Activated naive CD4-positive, alpha-beta T cell treated with anti-CD3 and anti-CD28 coated beads for 36 hours (primary cell): ENCODE measurements at regions of chr12 and their contacts with region 1.

Region 1: DNA sequence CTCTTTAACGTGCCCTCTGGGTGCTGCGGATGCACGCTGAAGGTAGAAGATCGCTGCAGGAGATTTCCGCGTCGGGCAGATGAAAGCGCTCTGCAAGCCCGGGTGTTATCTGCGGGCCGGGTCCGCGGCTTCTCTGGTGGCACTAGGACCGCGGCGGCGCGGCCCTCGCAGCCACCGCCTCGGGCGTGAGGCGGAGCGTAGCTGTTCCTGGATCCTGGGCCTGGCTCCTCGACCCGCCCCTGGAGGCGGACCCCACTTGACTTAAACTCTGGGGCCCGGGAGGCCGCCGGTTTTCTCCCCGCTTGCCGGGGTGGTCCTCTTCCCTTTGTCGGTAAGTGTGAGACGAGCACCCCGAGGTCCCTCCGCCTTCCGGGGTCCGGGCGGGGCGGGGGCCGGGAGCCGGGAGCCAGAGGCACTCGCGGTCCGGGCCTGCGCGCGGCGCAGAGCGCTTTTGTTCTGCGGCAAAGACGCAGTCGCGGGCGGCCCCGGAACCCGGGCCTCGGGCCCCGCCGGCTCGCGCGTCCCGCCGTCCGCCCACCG is at the start of gene RESF1:
- DNase-seq: peak; percentile 88
- H3K4me3 Mint-ChIP-seq: peak within 1 kb of the TSS; percentile 94
- H3K27ac Mint-ChIP-seq: peak within 1 kb of the TSS; percentile 99
- H3K4me1 Mint-ChIP-seq: peaks cover 66% of the 10 kb centered on the region
- H3K27me3 Mint-ChIP-seq: no peaks in the 10 kb centered on the region
- total RNA-seq, gene RESF1: 65.6 to 73.5 TPM

Region 2: GRCh38 chr12:31205054-31205453 is 754.2 kb before region 1 on chr12:
- CTCF ChIA-PET with region 1: no interaction called
- intact Hi-C with region 1: loop called (anchors 10 kb)
- DNase-seq: no peak
- H3K4me3 Mint-ChIP-seq: no peak overlapping the region
- H3K27ac Mint-ChIP-seq: peak overlapping the region; percentile 14
- H3K4me1 Mint-ChIP-seq: peaks cover 23% of the 10 kb centered on the region
- H3K27me3 Mint-ChIP-seq: peaks cover 15% of the 10 kb centered on the region

Region 3: GRCh38 chr12:31603546-31604009 is 355.7 kb before region 1 on chr12:
- CTCF ChIA-PET with region 1: no interaction called
- intact Hi-C with region 1: no loop called
- DNase-seq: no peak
- H3K4me3 Mint-ChIP-seq: no peak overlapping the region
- H3K27ac Mint-ChIP-seq: no peak overlapping the region
- H3K4me1 Mint-ChIP-seq: no peaks in the 10 kb centered on the region
- H3K27me3 Mint-ChIP-seq: no peaks in the 10 kb centered on the region

Region 4: GRCh38 chr12:31682136-31682962 is 276.9 kb before region 1 on chr12:
- CTCF ChIA-PET with region 1: interaction called, 4 read pairs
- intact Hi-C with region 1: loop called (anchors 1 kb)
- DNase-seq: peak; percentile 83
- H3K4me3 Mint-ChIP-seq: no peak overlapping the region
- H3K27ac Mint-ChIP-seq: peak overlapping the region; percentile 84
- H3K4me1 Mint-ChIP-seq: peaks cover 5% of the 10 kb centered on the region
- H3K27me3 Mint-ChIP-seq: no peaks in the 10 kb centered on the region

Region 5: GRCh38 chr12:31874961-31875608 is 84.1 kb before region 1 on chr12:
- CTCF ChIA-PET with region 1: interaction called, 3 read pairs
- intact Hi-C with region 1: loop called (anchors 1 kb)
- DNase-seq: peak; percentile 90
- H3K4me3 Mint-ChIP-seq: peak overlapping the region; percentile 73
- H3K27ac Mint-ChIP-seq: peak overlapping the region; percentile 100
- H3K4me1 Mint-ChIP-seq: peaks cover 37% of the 10 kb centered on the region
- H3K27me3 Mint-ChIP-seq: no peaks in the 10 kb centered on the region

Region 6: GRCh38 chr12:31989571-31990362 is 30.5 kb after region 1 on chr12:
- CTCF ChIA-PET with region 1: interaction called, 3 read pairs
- intact Hi-C with region 1: loop called (anchors 2 kb)
- DNase-seq: no peak
- H3K4me3 Mint-ChIP-seq: no peak overlapping the region
- H3K27ac Mint-ChIP-seq: peak overlapping the region; percentile 87
- H3K4me1 Mint-ChIP-seq: peaks cover 55% of the 10 kb centered on the region
- H3K27me3 Mint-ChIP-seq: no peaks in the 10 kb centered on the region

Region 7: DNA sequence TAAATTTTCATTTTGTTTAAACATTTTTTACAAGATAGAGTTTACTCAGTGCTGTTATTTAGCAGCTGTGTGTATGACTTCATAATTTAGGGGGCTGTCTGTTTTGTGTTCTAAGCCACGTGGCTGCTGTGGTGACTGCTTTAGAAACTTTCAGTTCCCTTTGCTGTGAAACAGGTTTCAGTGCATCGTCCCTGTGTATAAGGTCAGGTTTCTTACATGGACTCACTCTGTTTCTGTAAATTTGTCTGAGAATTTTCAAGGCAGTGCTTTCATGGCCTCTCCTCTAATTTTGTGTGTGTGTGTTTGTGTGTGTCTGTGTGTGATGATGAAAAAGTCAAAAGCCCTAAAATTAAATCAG is 179.8 kb after region 1 on chr12:
- CTCF ChIA-PET with region 1: interaction called, 4 read pairs
- intact Hi-C with region 1: loop called (anchors 5 kb)
- DNase-seq: peak; percentile 74
- H3K4me3 Mint-ChIP-seq: peak overlapping the region; percentile 71
- H3K27ac Mint-ChIP-seq: no peak overlapping the region
- H3K4me1 Mint-ChIP-seq: peaks cover 24% of the 10 kb centered on the region
- H3K27me3 Mint-ChIP-seq: peaks cover 2% of the 10 kb centered on the region